Activated CD4-positive, alpha-beta T cell treated with anti-CD3 and anti-CD28 coated beads for 36 hours (primary cell): ENCODE measurements at regions of chr12 and their contacts with region 1.

Region 1: GRCh38 chr12:120580787-120581723 is at the start of gene POP5:
- DNase-seq: peak; percentile 96
- ATAC-seq: peak; percentile 97
- H3K4me3 Mint-ChIP-seq: peak within 1 kb of the TSS; percentile 98
- H3K27ac Mint-ChIP-seq: peak within 1 kb of the TSS; percentile 91
- H3K4me1 Mint-ChIP-seq: peaks cover 35% of the 10 kb centered on the region
- H3K27me3 Mint-ChIP-seq: peaks cover 10% of the 10 kb centered on the region
- total RNA-seq, gene POP5: 44.8 to 52.6 TPM

Region 2: GRCh38 chr12:120283318-120283717 is 297.7 kb before region 1 on chr12:
- CTCF ChIA-PET with region 1: no interaction called
- POLR2A ChIA-PET with region 1: no interaction called
- intact Hi-C with region 1: no loop called
- DNase-seq: no peak
- ATAC-seq: no peak
- H3K4me3 Mint-ChIP-seq: no peak overlapping the region
- H3K27ac Mint-ChIP-seq: peak overlapping the region; percentile 39
- H3K4me1 Mint-ChIP-seq: no peaks in the 10 kb centered on the region
- H3K27me3 Mint-ChIP-seq: no peaks in the 10 kb centered on the region

Region 3: GRCh38 chr12:120317224-120318105 is 263.6 kb before region 1 on chr12:
- CTCF ChIA-PET with region 1: no interaction called
- POLR2A ChIA-PET with region 1: no interaction called
- intact Hi-C with region 1: loop called in 1 of 2 experiments (anchors 1 kb)
- DNase-seq: peak; percentile 100
- ATAC-seq: peak; percentile 100
- H3K4me3 Mint-ChIP-seq: peak overlapping the region; percentile 92
- H3K27ac Mint-ChIP-seq: peak overlapping the region; percentile 94
- H3K4me1 Mint-ChIP-seq: peaks cover 12% of the 10 kb centered on the region
- H3K27me3 Mint-ChIP-seq: no peaks in the 10 kb centered on the region

Region 4: GRCh38 chr12:120469450-120470149 is 111.5 kb before region 1 on chr12 and contains the start of gene SRSF9:
- CTCF ChIA-PET with region 1: interaction called, 5 read pairs
- POLR2A ChIA-PET with region 1: interaction called, 4 read pairs
- intact Hi-C with region 1: loop called in 1 of 2 experiments (anchors 1 kb)
- DNase-seq: peak; percentile 98
- ATAC-seq: peak; percentile 94
- H3K4me3 Mint-ChIP-seq: peak within 1 kb of the TSS; percentile 79
- H3K27ac Mint-ChIP-seq: peak within 1 kb of the TSS; percentile 88
- H3K4me1 Mint-ChIP-seq: peaks cover 40% of the 10 kb centered on the region
- H3K27me3 Mint-ChIP-seq: no peaks in the 10 kb centered on the region
- total RNA-seq, gene SRSF9: 140 to 209 TPM

Region 5: GRCh38 chr12:120534203-120534702 is 46.8 kb before region 1 on chr12 and contains the start of gene RNF10:
- CTCF ChIA-PET with region 1: interaction called, 10 read pairs
- POLR2A ChIA-PET with region 1: interaction called, 6 read pairs
- intact Hi-C with region 1: loop called (anchors 1 kb)
- DNase-seq: peak; percentile 82
- ATAC-seq: peak; percentile 67
- H3K4me3 Mint-ChIP-seq: peak within 1 kb of the TSS; percentile 87
- H3K27ac Mint-ChIP-seq: peak within 1 kb of the TSS; percentile 95
- H3K4me1 Mint-ChIP-seq: peaks cover 46% of the 10 kb centered on the region
- H3K27me3 Mint-ChIP-seq: no peaks in the 10 kb centered on the region
- total RNA-seq, gene RNF10: 177 to 184 TPM

Region 6: GRCh38 chr12:120710031-120710804 is 129.2 kb after region 1 on chr12 and contains the start of gene UNC119B:
- CTCF ChIA-PET with region 1: interaction called, 18 read pairs
- POLR2A ChIA-PET with region 1: interaction called, 3 read pairs
- intact Hi-C with region 1: loop called (anchors 1 kb)
- DNase-seq: peak; percentile 83
- ATAC-seq: peak; percentile 78
- H3K4me3 Mint-ChIP-seq: peak within 1 kb of the TSS; percentile 86
- H3K27ac Mint-ChIP-seq: peak within 1 kb of the TSS; percentile 82
- H3K4me1 Mint-ChIP-seq: peaks cover 34% of the 10 kb centered on the region
- H3K27me3 Mint-ChIP-seq: no peaks in the 10 kb centered on the region
- total RNA-seq, gene UNC119B: 20.1 to 26.6 TPM

Region 7: DNA sequence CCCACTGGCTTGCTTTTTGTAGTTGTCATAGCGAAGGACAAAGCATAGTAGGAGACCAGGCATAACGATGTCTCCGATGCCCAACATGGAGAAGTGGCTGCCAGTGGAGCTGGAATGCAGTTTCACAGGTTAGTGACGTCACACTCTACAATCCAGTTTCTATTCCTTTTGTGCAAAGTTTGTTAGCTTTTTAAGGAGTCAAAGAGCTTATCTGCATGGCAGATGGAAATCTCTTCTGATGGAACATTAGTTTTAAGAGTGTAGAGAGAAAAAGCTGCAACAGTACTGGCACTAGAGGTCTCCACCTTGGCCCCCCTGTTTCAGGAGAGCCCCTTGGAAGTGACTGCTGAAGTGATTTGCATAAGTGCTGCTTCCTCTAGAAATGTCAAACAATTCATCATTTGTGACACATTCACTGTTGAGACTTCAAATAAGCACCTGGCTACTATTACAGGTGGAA is 186.5 kb after region 1 on chr12:
- CTCF ChIA-PET with region 1: no interaction called
- POLR2A ChIA-PET with region 1: no interaction called
- intact Hi-C with region 1: no loop called
- DNase-seq: no peak
- ATAC-seq: no peak
- H3K4me3 Mint-ChIP-seq: no peak overlapping the region
- H3K27ac Mint-ChIP-seq: no peak overlapping the region
- H3K4me1 Mint-ChIP-seq: peaks cover 2% of the 10 kb centered on the region
- H3K27me3 Mint-ChIP-seq: no peaks in the 10 kb centered on the region

Region 8: GRCh38 chr12:120904197-120904773 is 323.2 kb after region 1 on chr12 and contains the start of gene SPPL3:
- CTCF ChIA-PET with region 1: no interaction called
- POLR2A ChIA-PET with region 1: interaction called, 4 read pairs
- intact Hi-C with region 1: loop called in 1 of 2 experiments (anchors 1 kb)
- DNase-seq: peak; percentile 96
- ATAC-seq: peak; percentile 81
- H3K4me3 Mint-ChIP-seq: peak within 1 kb of the TSS; percentile 92
- H3K27ac Mint-ChIP-seq: peak within 1 kb of the TSS; percentile 95
- H3K4me1 Mint-ChIP-seq: peaks cover 28% of the 10 kb centered on the region
- H3K27me3 Mint-ChIP-seq: no peaks in the 10 kb centered on the region
- total RNA-seq, gene SPPL3: 29.5 to 48.2 TPM

Region 9: GRCh38 chr12:121095544-121096198 is 514.6 kb after region 1 on chr12:
- CTCF ChIA-PET with region 1: no interaction called
- POLR2A ChIA-PET with region 1: no interaction called
- intact Hi-C with region 1: loop called in 1 of 2 experiments (anchors 1 kb)
- DNase-seq: peak; percentile 88
- ATAC-seq: peak; percentile 88
- H3K4me3 Mint-ChIP-seq: peak overlapping the region; percentile 65
- H3K27ac Mint-ChIP-seq: peak overlapping the region; percentile 56
- H3K4me1 Mint-ChIP-seq: peaks cover 43% of the 10 kb centered on the region
- H3K27me3 Mint-ChIP-seq: peaks cover 5% of the 10 kb centered on the region

Region 10: DNA sequence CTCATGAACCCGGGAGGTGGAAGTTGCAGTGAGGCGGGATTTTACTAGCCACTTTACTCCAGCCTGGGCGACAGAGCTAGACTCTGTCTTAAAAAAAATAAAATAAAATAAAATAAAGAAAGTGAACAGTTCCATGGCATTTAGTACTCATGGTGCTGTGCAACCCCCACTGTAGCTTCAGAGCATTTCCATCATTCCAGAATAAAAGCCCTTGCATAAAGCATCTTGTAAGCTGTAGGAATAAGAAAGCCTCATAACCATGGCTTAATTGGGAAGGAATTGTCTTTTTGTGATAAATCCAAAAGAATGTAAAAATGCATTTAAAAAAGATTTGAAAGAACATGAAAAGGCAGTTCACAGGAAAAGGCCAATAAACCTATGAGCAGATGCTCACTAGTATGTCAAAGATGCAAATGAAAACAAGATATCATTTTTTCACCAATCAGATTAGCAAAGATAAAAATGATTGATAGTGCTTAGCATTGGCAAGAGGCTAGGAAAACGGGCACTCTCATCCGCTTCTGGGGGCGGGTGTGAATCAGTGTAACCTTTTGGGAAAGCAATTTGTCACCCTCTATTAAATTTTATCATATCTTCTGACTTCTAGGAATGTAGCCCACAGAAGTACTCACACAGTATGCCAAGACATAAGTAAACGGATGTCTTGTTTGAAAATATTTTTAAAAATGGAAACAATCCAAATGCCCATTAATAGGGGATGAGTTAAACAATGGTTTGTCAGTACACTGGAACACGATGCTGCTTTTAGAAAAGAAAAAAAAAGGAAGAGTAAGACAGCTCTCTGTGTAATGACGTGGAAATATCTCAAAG is 1384.0 kb after region 1 on chr12:
- CTCF ChIA-PET with region 1: no interaction called
- POLR2A ChIA-PET with region 1: no interaction called
- intact Hi-C with region 1: no loop called
- DNase-seq: no peak
- ATAC-seq: no peak
- H3K4me3 Mint-ChIP-seq: no peak overlapping the region
- H3K27ac Mint-ChIP-seq: no peak overlapping the region
- H3K4me1 Mint-ChIP-seq: peaks cover 3% of the 10 kb centered on the region
- H3K27me3 Mint-ChIP-seq: no peaks in the 10 kb centered on the region